ENCODE measurements at regions of chr2 and their contacts with region 1.

Region 1: GRCh38 chr2:189624648-189625355 is 36.5 kb upstream of the ASNSD1 start:
- DNase-seq: no peak
- H3K4me3 ChIP-seq: no peak overlapping the region
- CTCF ChIP-seq: no peak

Region 2: DNA sequence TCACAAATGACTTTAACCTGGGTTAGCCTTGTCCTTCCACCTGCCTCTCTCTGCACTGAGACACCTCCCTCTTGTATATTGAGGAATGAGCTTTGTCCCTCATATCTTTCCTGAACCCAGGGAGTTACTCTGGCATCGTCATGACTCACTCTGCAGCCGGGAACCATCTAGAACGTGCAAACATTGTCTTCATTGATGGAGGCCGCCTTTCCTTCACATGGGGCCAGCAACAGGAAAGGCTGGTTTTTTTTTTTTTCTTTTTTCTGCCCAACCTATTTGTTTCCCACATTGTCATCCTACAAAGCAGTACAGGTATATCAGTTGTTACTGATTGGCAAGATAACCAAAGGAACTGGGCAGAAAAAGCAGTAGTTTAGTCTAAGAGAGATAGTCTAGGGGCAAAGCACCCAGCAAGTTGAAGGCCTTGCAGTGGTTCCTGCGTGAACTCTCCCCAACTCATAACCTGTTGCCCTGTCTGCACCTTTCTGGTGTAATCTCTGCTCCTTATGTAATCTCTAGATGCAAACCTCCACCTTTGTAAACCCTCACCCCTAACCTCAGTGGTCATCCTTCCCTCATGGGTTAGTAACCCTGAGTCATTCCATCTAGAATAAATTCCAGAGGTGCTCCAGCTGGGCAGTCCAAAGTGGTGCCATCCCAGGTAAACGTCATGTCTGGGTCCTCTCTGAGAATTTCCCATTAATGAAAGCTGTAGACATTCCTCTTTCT is 82.5 kb before region 1 on chr2:
- in situ Hi-C with region 1: loop called (anchors 5 kb)
- DNase-seq: no peak
- H3K4me3 ChIP-seq: no peak overlapping the region
- CTCF ChIP-seq: no peak